SK-N-SH (cell line): ENCODE measurements at regions of chr19 and their contacts with region 1.

Region 1: DNA sequence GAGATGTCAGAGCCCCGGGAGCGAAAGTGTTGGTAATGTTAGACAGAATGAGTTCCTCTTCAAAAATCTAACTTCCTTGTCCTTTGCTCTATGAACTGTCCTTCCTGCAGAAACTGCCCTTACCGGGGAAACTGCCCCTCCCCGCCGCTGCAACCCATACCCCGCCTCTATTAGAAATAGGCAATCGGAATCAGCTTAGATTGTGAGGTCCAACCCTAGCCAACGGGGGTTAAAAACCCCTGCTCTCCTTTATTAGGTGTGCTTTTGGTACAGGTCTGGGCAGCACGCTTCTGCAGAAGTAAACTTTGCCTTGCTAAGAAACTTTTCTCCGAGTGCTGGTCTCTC is 11.5 kb upstream of the CAPNS1 start:
- DNase-seq: peak; percentile 44
- H3K4me3 ChIP-seq: peak overlapping the region; percentile 50 to 68
- H3K27ac ChIP-seq: peak overlapping the region; percentile 82 to 89
- H3K4me1 ChIP-seq: peaks cover 0 to 3% of the 10 kb centered on the region in 2 experiments; a peak in 1 of 4 replicates
- H3K27me3 ChIP-seq: no peaks in the 10 kb centered on the region
- CTCF ChIP-seq: no peak
- EP300 ChIP-seq: no peak
- RAD21 ChIP-seq: no peak

Region 2: DNA sequence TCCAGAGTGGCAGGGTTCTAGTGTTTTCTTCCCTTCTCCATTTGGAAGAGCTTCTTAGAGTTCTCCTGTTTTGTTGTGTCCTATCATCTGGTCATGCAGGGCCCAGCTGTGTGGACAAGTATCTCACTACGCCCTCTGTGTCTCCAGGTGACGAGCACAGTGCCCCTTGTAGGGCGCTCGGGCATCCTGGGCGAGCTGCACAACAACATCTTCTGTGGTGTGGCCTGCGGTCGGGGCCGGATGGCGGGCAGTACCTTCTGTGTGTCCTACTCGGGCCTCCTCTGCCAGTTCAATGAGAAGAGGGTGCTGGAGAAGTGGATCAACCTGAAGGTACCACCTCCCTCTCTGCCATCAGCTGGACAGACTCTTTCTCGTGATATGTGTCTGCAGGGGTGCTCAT is 60.7 kb before region 1 on chr19:
- CTCF ChIA-PET with region 1: no interaction called
- POLR2A ChIA-PET with region 1: no interaction called
- DNase-seq: no peak
- H3K4me3 ChIP-seq: no peak overlapping the region
- H3K27ac ChIP-seq: no peak overlapping the region; a peak in 1 of 4 replicates
- H3K4me1 ChIP-seq: peaks cover 0 to 12% of the 10 kb centered on the region in 2 experiments; a peak in 1 of 4 replicates
- H3K27me3 ChIP-seq: no peaks in the 10 kb centered on the region
- CTCF ChIP-seq: no peak
- EP300 ChIP-seq: no peak
- RAD21 ChIP-seq: no peak

Region 3: GRCh38 chr19:36086326-36086725 is 42.0 kb before region 1 on chr19:
- CTCF ChIA-PET with region 1: no interaction called
- POLR2A ChIA-PET with region 1: no interaction called
- DNase-seq: no peak
- H3K4me3 ChIP-seq: no peak overlapping the region
- H3K27ac ChIP-seq: no peak overlapping the region
- H3K4me1 ChIP-seq: no peaks in the 10 kb centered on the region
- H3K27me3 ChIP-seq: no peaks in the 10 kb centered on the region
- CTCF ChIP-seq: no peak
- EP300 ChIP-seq: no peak
- RAD21 ChIP-seq: no peak

Region 4: GRCh38 chr19:36114763-36115452 is 13.5 kb before region 1 on chr19 and contains the start of gene POLR2I:
- CTCF ChIA-PET with region 1: interaction called, 14 read pairs
- POLR2A ChIA-PET with region 1: interaction called, 6 read pairs
- DNase-seq: peak; percentile 97
- H3K4me3 ChIP-seq: peak within 1 kb of the TSS; percentile 85 to 87
- H3K27ac ChIP-seq: peak within 1 kb of the TSS; percentile 80 to 96
- H3K4me1 ChIP-seq: peaks cover 6 to 22% of the 10 kb centered on the region in 2 experiments; a peak in 1 of 4 replicates
- H3K27me3 ChIP-seq: no peaks in the 10 kb centered on the region
- CTCF ChIP-seq: no peak
- EP300 ChIP-seq: 0 out of 4 replicates have a peak, but pooled peaks of 1 of the 2 experiments have one; percentile 2
- RAD21 ChIP-seq: no peak
- polyA plus RNA-seq, gene POLR2I: 54.8 and 140 TPM in 2 replicates

Region 5: GRCh38 chr19:36169084-36169760 is 40.9 kb after region 1 on chr19:
- CTCF ChIA-PET with region 1: interaction called, 63 read pairs
- POLR2A ChIA-PET with region 1: interaction called, 6 read pairs
- DNase-seq: no peak
- H3K4me3 ChIP-seq: no peak overlapping the region
- H3K27ac ChIP-seq: peak overlapping the region in 1 of 2 experiments; percentile 24; a peak in 1 of 4 replicates
- H3K4me1 ChIP-seq: peaks cover 4 to 5% of the 10 kb centered on the region in 2 experiments; a peak in 2 of 4 replicates
- H3K27me3 ChIP-seq: no peaks in the 10 kb centered on the region
- CTCF ChIP-seq: no peak
- EP300 ChIP-seq: no peak
- RAD21 ChIP-seq: no peak

Region 6: DNA sequence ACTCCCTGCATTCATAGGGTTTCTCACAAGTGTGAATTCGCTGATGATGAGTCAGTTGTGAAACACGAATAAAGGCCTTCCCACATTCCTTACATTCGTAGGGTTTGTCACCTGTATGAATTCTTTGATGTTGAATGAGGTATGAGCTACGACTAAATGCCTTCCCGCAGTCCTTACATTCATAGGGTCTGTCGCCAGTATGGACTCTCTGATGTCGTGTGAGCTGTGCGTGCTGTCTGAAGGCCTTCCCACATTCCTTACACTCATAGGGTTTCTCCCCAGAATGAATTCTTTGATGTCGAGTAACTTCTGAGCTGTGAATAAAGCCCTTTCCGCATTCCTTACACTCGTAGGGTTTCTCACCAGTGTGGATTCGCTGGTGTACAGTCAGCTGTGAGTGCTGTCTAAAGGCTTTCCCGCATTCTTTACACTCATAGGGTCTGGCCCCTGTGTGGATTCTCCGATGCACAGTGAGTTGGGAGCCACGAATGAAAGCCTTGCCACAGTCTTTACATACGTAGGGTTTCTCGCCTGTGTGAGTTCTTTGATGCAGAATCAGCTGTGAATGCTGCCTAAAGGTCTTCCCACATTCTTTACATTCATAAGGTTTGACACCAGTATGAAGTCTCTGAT is 54.4 kb after region 1 on chr19:
- CTCF ChIA-PET with region 1: interaction called, 12 read pairs
- POLR2A ChIA-PET with region 1: no interaction called
- DNase-seq: no peak
- H3K4me3 ChIP-seq: no peak overlapping the region
- H3K27ac ChIP-seq: no peak overlapping the region
- H3K4me1 ChIP-seq: no peaks in the 10 kb centered on the region
- H3K27me3 ChIP-seq: no peaks in the 10 kb centered on the region
- CTCF ChIP-seq: no peak
- EP300 ChIP-seq: no peak
- RAD21 ChIP-seq: no peak

Region 7: GRCh38 chr19:36257520-36257876 is 129.1 kb after region 1 on chr19:
- CTCF ChIA-PET with region 1: no interaction called
- POLR2A ChIA-PET with region 1: no interaction called
- DNase-seq: peak; percentile 85
- H3K4me3 ChIP-seq: peak overlapping the region; percentile 54 to 57
- H3K27ac ChIP-seq: no peak overlapping the region
- H3K4me1 ChIP-seq: peaks cover 0 to 3% of the 10 kb centered on the region in 2 experiments; a peak in 1 of 4 replicates
- H3K27me3 ChIP-seq: no peaks in the 10 kb centered on the region
- CTCF ChIP-seq: no peak
- EP300 ChIP-seq: no peak
- RAD21 ChIP-seq: no peak